B cell (primary cell): ENCODE measurements at regions of chr4 and their contacts with region 1.

Region 1: DNA sequence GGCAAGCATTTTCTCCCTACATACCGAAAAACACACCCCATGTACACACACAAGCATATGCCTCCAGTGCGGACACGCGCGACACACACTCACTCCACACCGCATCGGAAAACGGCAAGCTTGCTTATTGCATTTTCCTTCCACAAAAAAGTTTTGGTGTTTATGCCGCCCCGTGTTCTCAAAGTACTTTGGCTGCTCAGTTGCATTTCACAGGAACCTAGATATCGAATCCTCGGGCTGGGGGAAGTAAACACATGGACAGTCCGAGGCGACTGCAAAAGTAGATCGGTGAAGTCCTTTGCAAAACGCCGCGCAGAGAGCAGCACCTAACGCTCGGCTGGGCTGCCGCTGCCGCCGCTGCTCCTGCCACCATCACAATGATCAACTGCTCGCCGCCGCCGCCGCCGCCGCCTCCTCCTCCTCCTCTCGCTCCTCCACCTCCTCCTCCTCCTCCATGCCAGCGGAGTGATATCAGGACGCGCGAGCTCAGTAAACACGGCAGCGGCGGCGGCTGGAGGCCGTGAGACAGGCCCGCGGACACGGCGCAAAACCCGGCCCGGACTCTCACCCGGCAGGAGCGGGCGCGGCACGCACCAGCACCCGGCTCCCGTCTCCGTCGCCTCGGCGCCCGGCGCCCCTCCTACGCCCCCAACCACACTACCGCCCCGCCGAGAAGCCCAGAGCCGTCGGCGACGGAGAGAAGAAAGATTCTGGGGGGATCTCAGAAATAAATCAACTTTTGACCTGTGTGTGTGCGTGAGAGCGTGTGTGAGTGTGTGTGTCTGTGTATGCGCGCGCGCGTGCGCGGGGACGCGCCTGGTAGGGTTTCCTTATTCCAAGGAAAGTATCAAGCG is at the start of gene MAML3:
- DNase-seq: peak; percentile 82
- ATAC-seq: peak; percentile 18
- H3K4me3 ChIP-seq: peak within 1 kb of the TSS; percentile 54 to 88 (median 79)
- H3K4me3 Mint-ChIP-seq: peak within 1 kb of the TSS; percentile 91
- H3K27ac ChIP-seq: no peak within 1 kb of the TSS
- H3K27ac Mint-ChIP-seq: peak within 1 kb of the TSS; percentile 82
- H3K4me1 ChIP-seq: peaks cover 48 to 68% of the 10 kb centered on the region in 2 donors
- H3K4me1 Mint-ChIP-seq: peaks cover 58% of the 10 kb centered on the region
- H3K27me3 ChIP-seq: peaks cover 0 to 72% (median 28%) of the 10 kb centered on the region in 4 experiments
- H3K27me3 Mint-ChIP-seq: peaks cover 53% of the 10 kb centered on the region
- CTCF ChIP-seq: no peak
- total RNA-seq, gene MAML3: 5.3 and 6.1 TPM in 2 replicates

Region 2: GRCh38 chr4:139554893-139555704 is 598.8 kb before region 1 on chr4:
- CTCF ChIA-PET with region 1: no interaction called
- POLR2A ChIA-PET with region 1: no interaction called
- intact Hi-C with region 1: loop called (anchors 2 kb)
- DNase-seq: peak; percentile 91
- ATAC-seq: peak; percentile 60
- H3K4me3 ChIP-seq: peak overlapping the region; percentile 73 to 96 (median 89)
- H3K4me3 Mint-ChIP-seq: peak overlapping the region; percentile 100
- H3K27ac ChIP-seq: peak overlapping the region; percentile 93 to 98
- H3K27ac Mint-ChIP-seq: peak overlapping the region; percentile 100
- H3K4me1 ChIP-seq: peaks cover 29 to 31% of the 10 kb centered on the region in 2 donors
- H3K4me1 Mint-ChIP-seq: peaks cover 63% of the 10 kb centered on the region
- H3K27me3 ChIP-seq: no peaks in the 10 kb centered on the region
- H3K27me3 Mint-ChIP-seq: no peaks in the 10 kb centered on the region
- CTCF ChIP-seq: no peak

Region 3: DNA sequence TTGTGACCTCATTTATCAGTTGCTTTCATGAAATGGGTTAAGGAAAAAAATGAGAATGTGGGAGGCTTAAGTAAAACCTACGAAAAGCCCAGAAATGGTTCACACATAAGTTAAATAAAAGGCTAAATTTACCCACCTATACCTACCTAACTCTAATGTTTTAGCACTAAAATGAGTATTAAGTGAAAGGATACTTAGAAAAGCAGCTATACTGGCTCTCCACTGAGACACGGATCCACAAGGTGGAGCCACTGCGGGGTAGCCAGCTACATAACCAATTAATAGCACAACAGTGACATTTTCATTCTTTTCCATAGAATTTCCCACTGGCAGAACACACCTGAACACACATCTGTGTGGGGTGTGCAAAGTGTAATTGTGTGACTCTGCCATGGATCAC is 101.9 kb before region 1 on chr4:
- CTCF ChIA-PET with region 1: interaction called, 6 read pairs
- POLR2A ChIA-PET with region 1: interaction called, 9 read pairs
- intact Hi-C with region 1: loop called (anchors 1 kb)
- DNase-seq: peak; percentile 44
- ATAC-seq: no peak
- H3K4me3 ChIP-seq: no peak overlapping the region
- H3K4me3 Mint-ChIP-seq: no peak overlapping the region
- H3K27ac ChIP-seq: no peak overlapping the region
- H3K27ac Mint-ChIP-seq: no peak overlapping the region
- H3K4me1 ChIP-seq: peaks cover 32 to 34% of the 10 kb centered on the region in 2 donors
- H3K4me1 Mint-ChIP-seq: peaks cover 47% of the 10 kb centered on the region
- H3K27me3 ChIP-seq: no peaks in the 10 kb centered on the region
- H3K27me3 Mint-ChIP-seq: peaks cover 44% of the 10 kb centered on the region
- CTCF ChIP-seq: peak; percentile 43

Region 4: DNA sequence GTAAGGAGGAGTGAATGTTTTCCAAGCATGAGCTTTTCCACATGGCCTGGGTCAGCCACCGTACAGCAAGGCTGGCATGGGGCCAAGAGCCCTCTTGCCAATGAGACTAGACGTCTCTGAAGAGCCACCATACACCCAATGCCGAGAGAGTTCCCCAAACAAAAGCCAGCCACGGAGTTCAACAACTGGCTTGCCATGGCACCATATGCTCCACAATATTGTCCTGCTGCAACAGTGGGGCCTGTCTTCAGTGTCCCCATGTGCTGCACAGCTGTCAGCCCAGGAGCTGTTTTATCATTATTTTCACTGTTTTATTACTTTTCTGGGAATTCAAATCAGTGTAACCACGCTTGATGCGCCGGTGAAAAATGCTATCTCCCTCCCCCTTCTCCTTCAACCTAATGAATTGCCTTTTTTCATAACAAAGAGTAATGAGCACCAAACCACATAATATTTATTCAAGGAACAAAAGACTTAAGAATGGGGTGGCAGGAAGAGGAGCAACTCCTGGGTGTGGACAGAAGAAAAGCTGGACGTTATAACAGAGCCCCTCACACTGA is 18.3 kb before region 1 on chr4:
- CTCF ChIA-PET with region 1: no interaction called
- POLR2A ChIA-PET with region 1: no interaction called
- intact Hi-C with region 1: no loop called
- DNase-seq: no peak
- ATAC-seq: no peak
- H3K4me3 ChIP-seq: no peak overlapping the region
- H3K4me3 Mint-ChIP-seq: no peak overlapping the region
- H3K27ac ChIP-seq: no peak overlapping the region
- H3K27ac Mint-ChIP-seq: no peak overlapping the region
- H3K4me1 ChIP-seq: no peaks in the 10 kb centered on the region
- H3K4me1 Mint-ChIP-seq: no peaks in the 10 kb centered on the region
- H3K27me3 ChIP-seq: no peaks in the 10 kb centered on the region
- H3K27me3 Mint-ChIP-seq: peaks cover 12% of the 10 kb centered on the region
- CTCF ChIP-seq: no peak

Region 5: GRCh38 chr4:140252742-140253555 is 99.0 kb after region 1 on chr4:
- CTCF ChIA-PET with region 1: interaction called, 13 read pairs
- POLR2A ChIA-PET with region 1: no interaction called
- intact Hi-C with region 1: loop called (anchors 1 kb)
- DNase-seq: peak; percentile 75
- ATAC-seq: peak; percentile 81
- H3K4me3 ChIP-seq: peak overlapping the region in 4 of 5 experiments; percentile 50 to 78 (median 68)
- H3K4me3 Mint-ChIP-seq: peak overlapping the region; percentile 78
- H3K27ac ChIP-seq: peak overlapping the region in 1 of 2 donors; percentile 11
- H3K27ac Mint-ChIP-seq: no peak overlapping the region
- H3K4me1 ChIP-seq: peaks cover 9 to 15% of the 10 kb centered on the region in 2 donors
- H3K4me1 Mint-ChIP-seq: peaks cover 10% of the 10 kb centered on the region
- H3K27me3 ChIP-seq: peaks cover 0 to 16% (median 5%) of the 10 kb centered on the region in 4 experiments
- H3K27me3 Mint-ChIP-seq: peaks cover 43% of the 10 kb centered on the region
- CTCF ChIP-seq: peak; percentile 94

Region 6: DNA sequence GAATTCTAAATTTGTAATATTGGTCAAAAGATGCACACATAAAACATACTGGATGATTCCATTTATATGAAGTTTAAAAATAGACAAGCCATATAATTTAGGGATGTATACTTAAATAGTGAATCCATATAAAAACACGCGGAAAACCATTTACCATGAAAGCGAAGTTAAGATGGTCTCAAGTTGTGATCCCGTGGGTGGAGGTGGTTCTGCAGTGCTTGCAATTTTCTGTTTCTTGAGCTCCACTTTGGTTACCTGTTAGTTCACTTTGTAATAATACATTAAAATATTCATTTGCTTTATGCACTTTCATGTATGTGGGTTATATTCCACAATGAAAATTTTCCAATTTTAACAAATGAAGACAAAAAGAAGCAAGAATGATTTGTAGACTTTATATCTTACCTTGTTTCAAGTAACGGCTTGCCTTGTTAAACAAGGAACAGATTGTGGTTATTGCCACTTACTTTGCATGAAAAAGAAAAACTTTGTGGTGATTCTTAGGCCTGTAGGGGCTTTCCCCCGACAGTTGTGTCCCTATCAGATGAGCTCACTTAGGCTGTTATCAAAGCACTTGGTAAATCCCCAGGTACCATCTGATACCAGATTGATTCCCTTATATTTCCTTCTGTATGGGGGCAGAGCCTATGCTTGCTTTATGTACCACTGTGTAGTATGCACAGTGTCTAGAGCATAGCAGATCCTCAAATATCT is 402.6 kb after region 1 on chr4:
- CTCF ChIA-PET with region 1: no interaction called
- POLR2A ChIA-PET with region 1: no interaction called
- intact Hi-C with region 1: loop called (anchors 10 kb)
- DNase-seq: peak; percentile 82
- ATAC-seq: peak; percentile 95
- H3K4me3 ChIP-seq: no peak overlapping the region
- H3K4me3 Mint-ChIP-seq: peak overlapping the region; percentile 5
- H3K27ac ChIP-seq: no peak overlapping the region
- H3K27ac Mint-ChIP-seq: no peak overlapping the region
- H3K4me1 ChIP-seq: peaks cover 16% of the 10 kb centered on the region in 2 donors
- H3K4me1 Mint-ChIP-seq: peaks cover 20% of the 10 kb centered on the region
- H3K27me3 ChIP-seq: peaks cover 0 to 35% (median 24%) of the 10 kb centered on the region in 4 experiments
- H3K27me3 Mint-ChIP-seq: peaks cover 35% of the 10 kb centered on the region
- CTCF ChIP-seq: no peak